ENCODE measurements at regions of chr1 and their contacts with region 1.

Region 1: GRCh38 chr1:225809842-225810578 is at the start of gene EPHX1:
- DNase-seq: peak; percentile 93
- ATAC-seq: peak; percentile 90
- H3K4me3 Mint-ChIP-seq: peak within 1 kb of the TSS; percentile 86
- H3K27ac Mint-ChIP-seq: peak within 1 kb of the TSS; percentile 68
- H3K4me1 Mint-ChIP-seq: peaks cover 30% of the 10 kb centered on the region
- H3K27me3 Mint-ChIP-seq: peaks cover 3% of the 10 kb centered on the region; the same call in 1 of the 2 replicates
- CTCF ChIP-seq: no peak
- total RNA-seq, gene EPHX1: 60.9 to 66.2 TPM (median 64.4 TPM) in 3 replicates

Region 2: GRCh38 chr1:225746361-225747179 is 63.4 kb before region 1 on chr1:
- CTCF ChIA-PET with region 1: no interaction called
- POLR2A ChIA-PET with region 1: no interaction called
- DNase-seq: peak; percentile 75
- ATAC-seq: peak; percentile 91
- H3K4me3 Mint-ChIP-seq: peak overlapping the region; percentile 20
- H3K27ac Mint-ChIP-seq: peak overlapping the region; percentile 65
- H3K4me1 Mint-ChIP-seq: peaks cover 29% of the 10 kb centered on the region
- H3K27me3 Mint-ChIP-seq: peaks cover 18% of the 10 kb centered on the region
- CTCF ChIP-seq: no peak

Region 3: GRCh38 chr1:225825607-225826007 is 15.6 kb after region 1 on chr1:
- CTCF ChIA-PET with region 1: interaction called, 16 read pairs
- POLR2A ChIA-PET with region 1: no interaction called
- DNase-seq: no peak
- ATAC-seq: no peak
- H3K4me3 Mint-ChIP-seq: no peak overlapping the region
- H3K27ac Mint-ChIP-seq: peak overlapping the region; percentile 39; the same call in 1 of the 2 replicates
- H3K4me1 Mint-ChIP-seq: peaks cover 36% of the 10 kb centered on the region
- H3K27me3 Mint-ChIP-seq: no peaks in the 10 kb centered on the region; the same call in 1 of the 2 replicates
- CTCF ChIP-seq: no peak

Region 4: DNA sequence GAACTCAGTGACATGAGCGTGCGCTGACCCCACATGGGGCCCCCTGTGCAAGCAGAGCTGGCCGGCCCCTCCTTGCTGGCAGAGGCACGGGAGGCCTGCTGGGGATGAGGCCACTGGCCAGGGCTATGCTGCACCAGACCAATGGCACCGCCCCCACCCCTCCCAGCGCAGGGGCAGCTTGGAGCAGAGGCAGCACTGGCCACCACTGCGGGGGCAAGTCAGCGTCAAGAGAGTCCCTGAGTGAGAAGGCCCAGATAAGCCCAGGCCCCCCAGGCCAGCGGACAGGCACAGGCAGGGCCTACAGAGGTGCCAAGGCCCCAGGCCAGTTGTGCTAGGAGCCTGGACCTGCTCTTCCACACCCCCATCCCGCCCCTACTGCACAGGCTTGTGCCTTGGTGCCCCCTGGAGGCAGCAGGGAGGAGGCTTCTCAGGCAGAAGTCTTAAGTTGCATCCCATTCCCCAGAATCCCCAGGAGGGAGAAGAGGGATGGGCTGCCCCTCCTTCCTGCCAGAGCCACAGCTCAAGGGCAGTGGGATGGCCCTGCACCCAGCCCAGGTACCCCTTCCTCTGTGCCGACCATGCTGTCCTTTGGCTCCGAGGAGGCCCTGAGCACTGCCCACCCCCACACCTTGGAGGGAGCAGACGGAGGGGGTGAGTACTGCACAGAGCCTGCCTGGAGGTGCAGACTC is 35.7 kb after region 1 on chr1:
- CTCF ChIA-PET with region 1: interaction called, 15 read pairs
- POLR2A ChIA-PET with region 1: no interaction called
- DNase-seq: peak; percentile 90
- ATAC-seq: peak; percentile 82
- H3K4me3 Mint-ChIP-seq: no peak overlapping the region
- H3K27ac Mint-ChIP-seq: peak overlapping the region; percentile 87
- H3K4me1 Mint-ChIP-seq: peaks cover 12% of the 10 kb centered on the region
- H3K27me3 Mint-ChIP-seq: no peaks in the 10 kb centered on the region
- CTCF ChIP-seq: peak; percentile 61